Heart right ventricle (tissue), 16 donors: ENCODE measurements at regions of chr13 and their contacts with region 1.

Region 1: DNA sequence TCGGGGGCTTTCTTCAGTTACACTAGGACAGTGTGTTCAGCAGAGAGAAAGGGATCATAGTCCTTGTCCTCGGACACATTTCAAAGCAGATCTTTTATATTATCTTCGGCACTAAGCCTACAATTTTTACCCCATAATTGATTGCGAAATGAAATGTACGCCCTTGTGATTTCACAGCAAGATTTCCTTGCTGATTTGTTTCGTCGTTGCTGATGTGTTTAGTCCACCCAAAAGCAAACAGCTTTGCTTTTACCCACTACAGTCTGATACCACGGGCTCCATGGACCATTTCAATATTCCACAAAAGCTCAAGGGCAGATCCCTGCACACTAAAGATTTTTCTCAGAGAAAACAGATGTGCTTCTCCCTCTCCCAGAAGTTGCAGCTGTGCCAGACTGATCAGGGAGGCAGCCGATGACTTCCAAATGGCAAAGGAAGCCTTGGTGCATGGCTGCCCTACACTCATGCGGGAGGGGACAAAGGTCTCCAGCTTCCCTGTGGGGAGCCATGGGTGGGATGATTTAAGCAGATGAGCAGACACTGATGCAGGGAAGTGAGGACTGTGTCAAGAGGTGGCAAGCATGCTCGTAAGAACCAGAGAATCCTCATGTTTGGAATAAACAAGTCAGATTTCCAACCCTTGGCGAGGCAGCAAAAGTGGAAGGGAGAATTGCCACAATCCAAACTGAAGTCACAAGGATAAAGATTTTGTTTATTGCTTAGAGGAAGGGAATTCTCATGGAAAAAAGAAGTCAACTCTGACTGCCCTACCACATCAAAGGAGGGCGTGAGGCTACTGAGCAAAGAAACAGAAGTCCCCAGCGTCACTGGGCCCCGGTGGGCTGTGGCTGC is 81.1 kb downstream of the STK24 start:
- DNase-seq: no peak
- ATAC-seq: peak; percentile 21 to 64 (median 49)
- H3K4me3 ChIP-seq: no peak overlapping the region
- H3K27ac ChIP-seq: peak overlapping the region in 7 of 10 donors; percentile 13 to 69 (median 34)
- H3K4me1 ChIP-seq: peaks cover 0 to 51% (median 39%) of the 10 kb centered on the region in 9 donors
- H3K27me3 ChIP-seq: no peaks in the 10 kb centered on the region
- CTCF ChIP-seq: no peak

Region 2: GRCh38 chr13:98556968-98557631 is 61.2 kb after region 1 on chr13:
- intact Hi-C with region 1: loop called in 2 of 10 experiments (anchors 10 kb)
- DNase-seq: no peak
- ATAC-seq: peak in 4 of 8 donors; percentile 31 to 57 (median 38)
- H3K4me3 ChIP-seq: no peak overlapping the region
- H3K27ac ChIP-seq: no peak overlapping the region
- H3K4me1 ChIP-seq: peaks cover 4 to 94% (median 62%) of the 10 kb centered on the region in 9 donors
- H3K27me3 ChIP-seq: no peaks in the 10 kb centered on the region
- CTCF ChIP-seq: peak in 1 of 9 donors; percentile 10

Region 3: DNA sequence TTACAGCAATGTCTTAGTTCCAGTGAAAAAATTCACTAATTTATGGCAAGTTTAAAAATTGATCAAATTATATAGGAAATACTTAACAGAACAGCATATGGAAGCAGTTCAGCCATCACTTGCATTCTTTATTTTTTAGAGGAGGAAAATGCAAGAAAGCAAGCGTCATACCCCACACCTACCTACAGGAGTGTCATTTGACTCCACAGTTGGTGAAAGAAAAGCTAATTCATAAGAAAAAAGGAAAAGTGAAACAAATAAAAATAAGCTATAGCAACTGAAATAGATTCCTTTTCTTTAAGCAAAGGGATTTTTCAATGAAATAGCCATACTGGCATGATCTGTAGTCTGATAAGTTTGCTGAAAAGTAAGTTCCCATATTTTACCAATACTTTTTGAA is 371.0 kb after region 1 on chr13:
- intact Hi-C with region 1: no loop called
- DNase-seq: no peak
- ATAC-seq: no peak
- H3K4me3 ChIP-seq: no peak overlapping the region
- H3K27ac ChIP-seq: no peak overlapping the region
- H3K4me1 ChIP-seq: peaks cover 0 to 9% (median 0%) of the 10 kb centered on the region in 9 donors
- H3K27me3 ChIP-seq: no peaks in the 10 kb centered on the region
- CTCF ChIP-seq: no peak

Region 4: DNA sequence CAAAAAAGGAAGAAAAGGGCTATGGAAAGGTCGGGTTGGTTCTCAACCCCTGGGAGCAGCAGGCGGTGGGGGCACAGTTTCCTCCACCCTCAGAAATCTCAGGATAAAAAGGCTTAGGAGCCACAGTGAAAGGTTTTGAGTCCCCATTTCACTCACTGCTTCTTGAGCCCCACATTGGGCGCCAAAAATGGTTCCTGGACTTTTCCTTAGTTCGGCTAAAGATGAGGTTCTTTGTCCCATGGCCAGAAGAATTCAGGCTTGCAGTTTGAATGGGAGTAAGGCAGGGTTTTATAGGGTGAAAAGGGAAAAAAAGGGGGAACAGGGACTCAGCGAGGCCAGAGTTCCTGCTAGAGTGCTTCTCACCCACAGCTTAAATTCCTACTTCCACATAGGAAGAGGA is 1913.3 kb after region 1 on chr13:
- intact Hi-C with region 1: no loop called
- DNase-seq: no peak
- ATAC-seq: no peak
- H3K4me3 ChIP-seq: no peak overlapping the region
- H3K27ac ChIP-seq: no peak overlapping the region
- H3K4me1 ChIP-seq: no peaks in the 10 kb centered on the region
- H3K27me3 ChIP-seq: no peaks in the 10 kb centered on the region
- CTCF ChIP-seq: no peak